GM18951 (cell line): ENCODE measurements at regions of chr1 and their contacts with region 1.

Region 1: GRCh38 chr1:15918962-15919715 is 56.8 kb downstream of the ZBTB17 start:
- POLR2A ChIP-seq: no peak

Region 2: GRCh38 chr1:13922466-13923110 is 1996.6 kb before region 1 on chr1:
- in situ Hi-C with region 1: no loop called
- POLR2A ChIP-seq: no peak

Region 3: DNA sequence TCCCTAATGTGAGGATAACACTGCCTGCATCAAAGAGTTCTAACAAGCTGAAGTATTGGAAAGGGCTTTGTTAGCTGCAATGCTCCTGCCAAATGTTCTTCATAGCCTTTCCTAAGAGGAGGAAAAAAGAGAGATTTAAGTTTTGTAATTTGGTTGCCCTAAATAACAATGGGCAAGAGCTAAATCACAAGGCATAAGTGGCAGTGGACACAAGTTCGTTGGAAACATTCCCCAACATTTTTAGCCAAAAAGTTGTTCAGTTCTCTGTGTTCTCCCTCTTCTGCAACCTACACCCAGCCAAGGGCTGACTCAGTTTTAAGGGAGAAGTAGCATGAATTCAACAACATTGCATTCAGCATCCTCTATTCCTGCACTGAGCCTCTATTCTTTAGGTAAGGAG is 109.1 kb before region 1 on chr1:
- in situ Hi-C with region 1: loop called (anchors 10 kb)
- POLR2A ChIP-seq: no peak